Heart left ventricle (tissue), 16 donors: ENCODE measurements at regions of chr22 and their contacts with region 1.

Region 1: GRCh38 chr22:50341977-50342650 is 1.0 kb upstream of the PPP6R2 start:
- DNase-seq: peak; percentile 88 to 94 (median 90)
- ATAC-seq: peak; percentile 67 to 86 (median 79)
- H3K4me3 ChIP-seq: peak overlapping the region; percentile 61 to 100 (median 86)
- H3K27ac ChIP-seq: peak overlapping the region in 10 of 12 donors; percentile 57 to 92 (median 80)
- H3K4me1 ChIP-seq: peaks cover 0 to 22% (median 9%) of the 10 kb centered on the region in 12 donors
- H3K27me3 ChIP-seq: no peaks in the 10 kb centered on the region
- CTCF ChIP-seq: peak; percentile 94 to 99 (median 98)
- POLR2A ChIP-seq: no peak

Region 2: DNA sequence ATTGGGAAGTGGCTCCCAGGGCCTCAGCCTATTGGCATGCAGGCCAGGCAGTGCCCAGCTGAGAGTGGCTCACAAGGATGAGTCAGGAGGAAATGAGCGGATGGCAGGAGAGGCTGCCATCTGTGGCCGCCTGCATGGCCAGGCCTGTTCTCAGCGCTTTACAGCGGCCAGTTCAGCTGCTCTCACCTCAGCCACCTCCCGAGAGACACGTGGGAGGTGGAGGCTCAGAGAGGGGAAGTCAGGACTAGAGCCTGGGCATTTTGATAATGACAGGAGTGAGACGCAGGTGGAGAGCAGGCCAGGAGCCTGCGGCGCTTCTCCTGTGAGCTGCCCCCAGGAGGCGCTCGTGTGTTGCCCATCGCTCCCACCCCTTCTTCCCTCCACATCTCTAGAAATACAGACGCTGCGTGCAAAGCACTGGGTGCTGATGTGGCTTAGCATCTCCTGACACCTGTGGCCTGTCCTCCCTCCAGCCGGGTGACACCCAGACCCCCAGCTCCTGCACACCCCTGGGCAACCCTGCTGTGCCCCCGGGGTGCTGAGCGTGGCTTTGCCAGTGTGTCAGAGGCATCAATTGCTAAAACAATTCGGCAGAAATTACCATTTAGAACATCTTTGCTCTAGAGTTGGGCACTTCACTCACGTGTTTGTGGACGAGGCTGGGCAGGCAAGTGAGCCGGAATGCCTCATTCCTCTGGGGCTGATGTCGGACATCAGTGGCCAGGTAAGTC is 193.0 kb before region 1 on chr22:
- intact Hi-C with region 1: loop called in 2 of 10 experiments (anchors 5 to 10 kb)
- DNase-seq: peak in 4 of 5 donors; percentile 32 to 77 (median 54)
- ATAC-seq: peak; percentile 19 to 83 (median 78)
- H3K4me3 ChIP-seq: no peak overlapping the region
- H3K27ac ChIP-seq: no peak overlapping the region
- H3K4me1 ChIP-seq: no peaks in the 10 kb centered on the region
- H3K27me3 ChIP-seq: peaks cover 0 to 12% (median 0%) of the 10 kb centered on the region in 9 donors
- CTCF ChIP-seq: peak; percentile 53 to 88 (median 66)
- POLR2A ChIP-seq: no peak

Region 3: GRCh38 chr22:50157709-50158375 is 184.3 kb before region 1 on chr22:
- intact Hi-C with region 1: loop called in 1 of 10 experiments (anchors 10 kb)
- DNase-seq: no peak
- ATAC-seq: peak in 1 of 4 donors; percentile 12
- H3K4me3 ChIP-seq: no peak overlapping the region
- H3K27ac ChIP-seq: no peak overlapping the region
- H3K4me1 ChIP-seq: no peaks in the 10 kb centered on the region
- H3K27me3 ChIP-seq: peaks cover 0 to 10% (median 0%) of the 10 kb centered on the region in 9 donors
- CTCF ChIP-seq: no peak
- POLR2A ChIP-seq: no peak

Region 4: GRCh38 chr22:50244420-50245213 is 97.5 kb before region 1 on chr22 and contains the start of gene TUBGCP6:
- intact Hi-C with region 1: loop called in 2 of 10 experiments (anchors 2 kb)
- DNase-seq: peak; percentile 96 to 98 (median 96)
- ATAC-seq: peak; percentile 88 to 96 (median 93)
- H3K4me3 ChIP-seq: peak within 1 kb of the TSS; percentile 51 to 99 (median 88)
- H3K27ac ChIP-seq: peak within 1 kb of the TSS; percentile 72 to 96 (median 88)
- H3K4me1 ChIP-seq: peaks cover 13 to 62% (median 44%) of the 10 kb centered on the region in 12 donors
- H3K27me3 ChIP-seq: no peaks in the 10 kb centered on the region
- CTCF ChIP-seq: peak in 7 of 12 donors; percentile 6 to 39 (median 24)
- POLR2A ChIP-seq: peak in 1 of 2 donors; percentile 81
- total RNA-seq, gene TUBGCP6: 14.1 to 28.8 (median 18.1) TPM

Region 5: DNA sequence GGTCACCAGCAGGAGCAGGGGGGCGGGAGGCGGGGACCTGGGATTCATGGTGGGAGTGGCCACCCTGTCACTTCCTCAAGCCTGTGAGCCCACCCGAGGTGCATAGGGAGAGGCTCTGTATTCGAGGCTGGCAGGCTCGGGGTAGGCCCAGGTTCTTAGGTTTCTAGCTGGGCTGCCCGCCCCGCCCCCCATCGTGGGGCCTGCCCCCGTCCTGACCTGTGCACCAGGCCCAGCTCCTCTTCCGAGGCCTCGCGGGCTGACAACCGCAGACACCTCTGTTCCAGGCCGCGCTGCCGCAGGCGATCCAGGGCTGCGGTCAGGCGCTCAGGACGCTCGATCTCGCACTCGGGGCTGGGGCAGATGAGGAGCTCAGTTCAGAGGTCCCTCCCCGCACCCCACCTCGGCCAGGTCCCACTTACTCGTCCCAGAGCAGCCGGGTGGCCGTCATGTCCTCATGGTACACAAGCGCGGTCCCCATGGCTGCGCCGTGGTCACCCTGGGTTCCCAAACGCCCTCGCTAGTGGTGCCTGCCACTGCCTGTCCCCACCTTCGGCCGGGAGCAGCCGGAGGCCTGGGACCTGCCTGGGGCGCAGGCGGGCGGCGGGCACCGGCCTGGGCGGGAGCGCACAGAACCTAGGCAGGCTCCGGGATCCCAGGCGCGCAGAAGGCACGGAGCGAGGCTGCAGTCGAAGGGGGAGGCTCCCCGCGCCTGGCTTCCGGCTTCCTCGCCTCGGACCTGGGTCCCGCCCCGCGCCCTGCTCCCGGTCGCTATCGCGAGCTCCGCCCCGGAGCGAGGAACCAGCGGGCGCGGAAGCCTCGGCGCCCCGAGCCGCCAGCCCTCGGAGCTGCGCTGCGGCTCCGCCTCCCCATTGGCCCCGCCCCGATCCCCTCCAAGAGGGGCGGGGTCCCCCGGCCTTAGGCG is 91.3 kb before region 1 on chr22 and contains the start of gene HDAC10:
- intact Hi-C with region 1: loop called (anchors 1 to 5 kb)
- DNase-seq: peak; percentile 75 to 94 (median 85)
- ATAC-seq: peak; percentile 25 to 80 (median 72)
- H3K4me3 ChIP-seq: peak within 1 kb of the TSS; percentile 53 to 83 (median 69)
- H3K27ac ChIP-seq: peak within 1 kb of the TSS in 11 of 12 donors; percentile 53 to 81 (median 65)
- H3K4me1 ChIP-seq: peaks cover 5 to 43% (median 27%) of the 10 kb centered on the region in 12 donors
- H3K27me3 ChIP-seq: no peaks in the 10 kb centered on the region
- CTCF ChIP-seq: no peak
- POLR2A ChIP-seq: peak in 1 of 2 donors; percentile 60
- total RNA-seq, gene HDAC10: 6.8 to 22.4 (median 10.9) TPM

Region 6: DNA sequence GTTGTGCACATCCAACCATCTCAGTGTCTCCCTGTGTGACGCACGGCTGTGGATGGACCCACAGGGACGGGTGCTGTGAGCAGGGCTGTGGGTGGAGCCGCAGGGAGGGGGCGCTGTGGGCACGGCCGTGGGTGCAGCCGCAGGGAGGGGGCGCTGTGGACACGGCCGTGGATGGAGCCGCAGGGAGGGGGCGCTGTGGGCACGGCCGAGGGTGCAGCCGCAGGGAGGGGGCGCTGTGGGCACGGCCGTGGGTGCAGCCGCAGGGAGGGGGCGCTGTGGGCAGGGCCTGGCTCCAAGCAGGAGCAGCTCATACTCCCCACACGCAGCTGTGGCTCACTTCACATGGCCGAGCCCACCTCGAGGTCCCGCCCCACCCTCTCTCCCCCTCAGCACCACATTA is 66.0 kb before region 1 on chr22:
- intact Hi-C with region 1: loop called in 5 of 10 experiments (anchors 5 kb)
- DNase-seq: peak in 4 of 5 donors; percentile 68 to 86 (median 73)
- ATAC-seq: peak; percentile 53 to 87 (median 81)
- H3K4me3 ChIP-seq: no peak overlapping the region
- H3K27ac ChIP-seq: peak overlapping the region in 1 of 12 donors; percentile 17
- H3K4me1 ChIP-seq: peaks cover 0 to 27% (median 15%) of the 10 kb centered on the region in 12 donors
- H3K27me3 ChIP-seq: peaks cover 0 to 9% (median 0%) of the 10 kb centered on the region in 9 donors
- CTCF ChIP-seq: peak; percentile 42 to 77 (median 58)
- POLR2A ChIP-seq: no peak

Region 7: GRCh38 chr22:50326959-50327710 is 15.0 kb before region 1 on chr22 and contains the start of gene DENND6B:
- intact Hi-C with region 1: loop called in 1 of 10 experiments (anchors 2 kb)
- DNase-seq: peak; percentile 77 to 92 (median 88)
- ATAC-seq: peak; percentile 86 to 98 (median 94)
- H3K4me3 ChIP-seq: peak within 1 kb of the TSS; percentile 45 to 95 (median 80)
- H3K27ac ChIP-seq: peak within 1 kb of the TSS; percentile 87 to 98 (median 95)
- H3K4me1 ChIP-seq: peaks cover 0 to 18% (median 11%) of the 10 kb centered on the region in 12 donors
- H3K27me3 ChIP-seq: no peaks in the 10 kb centered on the region
- CTCF ChIP-seq: peak; percentile 23 to 83 (median 57)
- POLR2A ChIP-seq: peak in 1 of 2 donors; percentile 56
- total RNA-seq, gene DENND6B: 1.0 to 3.2 (median 2.0) TPM